Caco-2 (cell line): ENCODE measurements at regions of chr13 and their contacts with region 1.

Region 1: DNA sequence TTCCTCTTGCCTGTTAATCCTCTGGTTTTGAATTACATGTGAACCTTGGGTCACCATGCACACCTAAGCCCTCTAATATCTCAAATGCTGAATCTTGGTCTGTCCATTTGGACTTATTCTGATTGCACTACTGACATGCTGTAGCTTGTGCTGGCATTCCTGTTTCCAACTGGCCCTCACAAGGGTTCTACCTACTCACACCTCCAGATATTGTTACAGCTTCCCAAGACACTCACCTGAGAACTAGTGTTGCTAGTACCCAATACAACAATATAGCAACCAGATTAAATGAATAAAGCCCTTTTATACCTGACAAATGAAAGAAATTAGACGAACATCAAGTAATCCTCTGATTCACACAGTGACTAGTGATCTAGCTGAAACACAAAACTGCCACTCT is 16.6 kb downstream of the TEX30 start:
- DNase-seq: no peak
- H3K4me3 ChIP-seq: no peak overlapping the region
- H3K4me3 Mint-ChIP-seq: no peak overlapping the region
- H3K27ac Mint-ChIP-seq: no peak overlapping the region
- H3K4me1 ChIP-seq: no peaks in the 10 kb centered on the region
- H3K4me1 Mint-ChIP-seq: no peaks in the 10 kb centered on the region
- H3K27me3 ChIP-seq: no peaks in the 10 kb centered on the region
- H3K27me3 Mint-ChIP-seq: no peaks in the 10 kb centered on the region
- CTCF ChIP-seq: no peak

Region 2: DNA sequence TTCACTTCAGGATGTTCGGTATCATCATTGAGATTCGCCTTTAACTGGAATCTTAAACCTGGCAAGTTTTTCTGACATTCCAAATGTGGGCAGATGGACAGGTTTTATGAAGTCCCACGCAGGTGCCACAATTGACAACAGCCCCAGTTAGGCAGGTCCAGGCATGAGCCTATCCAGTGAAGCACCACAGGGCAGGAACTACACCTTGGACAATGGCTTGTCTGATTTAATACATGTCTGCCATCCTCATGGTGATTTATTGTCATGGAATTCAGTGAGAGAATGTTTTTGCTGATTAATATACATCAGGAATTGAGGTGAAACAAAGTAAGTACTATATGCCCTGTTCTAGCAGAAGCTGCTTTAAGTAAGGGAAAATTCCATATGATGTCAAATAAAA is 170.4 kb before region 1 on chr13:
- CTCF ChIA-PET with region 1: no interaction called
- POLR2A ChIA-PET with region 1: interaction called, 10 read pairs
- intact Hi-C with region 1: no loop called
- DNase-seq: no peak
- H3K4me3 ChIP-seq: no peak overlapping the region
- H3K4me3 Mint-ChIP-seq: no peak overlapping the region
- H3K27ac Mint-ChIP-seq: no peak overlapping the region
- H3K4me1 ChIP-seq: no peaks in the 10 kb centered on the region
- H3K4me1 Mint-ChIP-seq: no peaks in the 10 kb centered on the region
- H3K27me3 ChIP-seq: 0 out of 2 replicates have a peak, but pooled peaks cover 1% of the 10 kb centered on the region
- H3K27me3 Mint-ChIP-seq: peaks cover 6% of the 10 kb centered on the region
- CTCF ChIP-seq: no peak

Region 3: DNA sequence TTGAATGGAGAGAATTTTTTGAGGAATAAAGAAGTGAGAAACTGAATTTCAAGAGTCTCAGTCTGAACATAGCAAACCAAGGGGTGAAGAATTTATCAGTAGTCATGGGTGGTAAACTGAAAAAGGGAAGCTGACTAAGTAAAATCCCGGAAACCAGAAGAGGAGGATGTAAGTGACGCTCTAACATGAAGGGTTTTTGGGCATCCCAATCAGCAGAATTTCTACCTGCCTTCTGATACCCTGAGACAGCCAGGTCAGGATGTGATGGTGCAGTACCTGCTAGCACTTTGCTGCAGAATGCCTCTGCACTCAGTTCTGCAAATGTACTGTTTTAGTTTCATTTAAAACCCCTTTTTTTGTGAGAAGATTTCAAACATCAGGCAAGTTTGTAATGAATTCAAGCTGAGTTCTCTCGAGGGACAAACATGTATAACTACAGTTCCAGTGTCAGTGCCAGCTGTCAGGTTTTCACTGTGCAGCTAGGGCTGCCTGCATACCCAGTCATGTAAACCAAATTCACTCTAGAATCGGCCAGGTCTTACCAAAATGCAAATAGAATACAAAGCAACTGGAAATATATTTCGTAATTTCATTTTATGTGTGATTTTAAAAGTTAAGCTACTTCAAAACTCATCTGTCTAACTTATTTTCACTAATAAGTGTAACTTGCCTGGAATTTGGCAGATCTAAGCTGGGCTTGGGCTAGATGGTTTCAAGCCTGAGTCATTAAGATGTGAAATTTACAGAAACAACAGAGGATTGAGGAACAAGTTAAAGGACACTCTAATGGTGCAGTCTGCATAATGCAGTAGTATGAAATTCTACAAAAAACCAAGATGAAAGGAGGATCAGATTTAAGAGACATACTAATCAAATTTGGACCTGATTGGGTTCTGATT is 75.9 kb before region 1 on chr13:
- CTCF ChIA-PET with region 1: no interaction called
- POLR2A ChIA-PET with region 1: no interaction called
- intact Hi-C with region 1: no loop called
- DNase-seq: no peak
- H3K4me3 ChIP-seq: no peak overlapping the region
- H3K4me3 Mint-ChIP-seq: no peak overlapping the region
- H3K27ac Mint-ChIP-seq: no peak overlapping the region
- H3K4me1 ChIP-seq: no peaks in the 10 kb centered on the region
- H3K4me1 Mint-ChIP-seq: no peaks in the 10 kb centered on the region
- H3K27me3 ChIP-seq: no peaks in the 10 kb centered on the region
- H3K27me3 Mint-ChIP-seq: no peaks in the 10 kb centered on the region
- CTCF ChIP-seq: no peak